ENCODE measurements at regions of chr11 and their contacts with region 1.

Region 1: DNA sequence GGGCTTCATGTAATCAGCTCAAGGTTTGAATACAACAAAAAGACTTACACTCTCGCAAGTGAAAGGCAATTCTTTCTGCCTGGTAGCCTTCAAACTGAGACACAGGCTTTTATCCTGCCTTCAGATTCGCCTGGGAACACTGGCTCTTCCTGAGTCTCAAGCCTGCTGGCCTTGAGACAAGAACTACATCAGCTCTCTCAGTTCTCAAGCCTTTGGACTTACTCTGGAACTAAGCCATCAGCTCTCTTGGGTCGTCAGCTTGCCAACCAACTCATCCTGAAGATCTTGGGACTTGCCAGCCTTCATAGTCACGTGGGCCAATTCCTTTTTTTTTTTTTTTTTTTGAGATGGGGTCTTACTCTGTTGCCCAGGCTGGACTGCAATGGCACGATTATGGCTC is 35.7 kb upstream of the LRRC10B start:
- DNase-seq: no peak
- ATAC-seq: no peak
- H3K4me3 ChIP-seq: no peak overlapping the region
- H3K4me3 Mint-ChIP-seq: no peak overlapping the region
- H3K27ac ChIP-seq: no peak overlapping the region
- H3K27ac Mint-ChIP-seq: peak overlapping the region in 1 of 2 donors; percentile 44
- H3K4me1 ChIP-seq: peaks cover 0 to 5% of the 10 kb centered on the region in 2 experiments
- H3K4me1 Mint-ChIP-seq: peaks cover 1 to 2% (median 2%) of the 10 kb centered on the region in 3 donors
- H3K27me3 ChIP-seq: peaks cover 0 to 4% of the 10 kb centered on the region in 2 experiments
- H3K27me3 Mint-ChIP-seq: no peaks in the 10 kb centered on the region

Region 2: GRCh38 chr11:61266602-61267001 is 206.3 kb before region 1 on chr11:
- CTCF ChIA-PET with region 1: no interaction called
- POLR2A ChIA-PET with region 1: interaction called in 1 of 2 experiments, 11 read pairs
- DNase-seq: no peak
- ATAC-seq: no peak
- H3K4me3 ChIP-seq: no peak overlapping the region
- H3K4me3 Mint-ChIP-seq: no peak overlapping the region
- H3K27ac ChIP-seq: no peak overlapping the region
- H3K27ac Mint-ChIP-seq: no peak overlapping the region
- H3K4me1 ChIP-seq: no peaks in the 10 kb centered on the region
- H3K4me1 Mint-ChIP-seq: no peaks in the 10 kb centered on the region
- H3K27me3 ChIP-seq: peaks cover 0 to 5% of the 10 kb centered on the region in 2 experiments
- H3K27me3 Mint-ChIP-seq: no peaks in the 10 kb centered on the region

Region 3: DNA sequence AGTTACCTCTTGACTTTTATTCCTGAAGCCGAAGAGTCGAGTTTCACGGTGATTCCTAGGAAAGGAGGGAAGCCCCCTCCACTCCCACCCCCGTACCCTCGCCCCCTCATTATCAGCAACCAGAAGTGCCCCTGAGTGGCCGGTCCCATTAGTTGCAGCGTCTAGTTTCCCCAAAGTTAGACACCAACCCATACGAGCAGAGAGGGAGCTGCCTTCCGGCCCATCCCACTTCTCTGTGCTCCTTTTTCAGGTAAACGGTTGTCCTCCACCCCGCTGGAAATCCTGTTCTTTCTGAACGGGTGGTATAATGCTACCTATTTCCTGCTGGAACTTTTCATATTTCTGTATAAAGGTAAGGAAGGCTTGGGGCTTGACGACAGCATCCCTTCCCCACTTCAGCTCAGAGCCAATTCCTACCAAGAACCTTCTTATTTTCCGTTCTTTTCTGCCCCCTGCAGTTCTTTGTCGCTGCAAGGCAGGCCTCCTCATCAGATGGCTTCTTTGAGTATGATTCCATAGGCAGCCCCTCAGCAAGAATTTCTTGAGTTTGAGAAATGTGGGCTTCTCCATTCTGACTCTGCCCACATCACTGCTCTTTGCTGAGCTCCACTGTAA is 79.8 kb before region 1 on chr11:
- CTCF ChIA-PET with region 1: no interaction called
- POLR2A ChIA-PET with region 1: interaction called in 1 of 2 experiments, 10 read pairs
- DNase-seq: peak in 13 of 35 experiments; percentile 6 to 54 (median 14)
- ATAC-seq: peak; percentile 34 to 64 (median 44)
- H3K4me3 ChIP-seq: peak overlapping the region; percentile 76 to 77
- H3K4me3 Mint-ChIP-seq: peak overlapping the region; percentile 91 to 95 (median 91)
- H3K27ac ChIP-seq: peak overlapping the region; percentile 89
- H3K27ac Mint-ChIP-seq: peak overlapping the region; percentile 98 to 99
- H3K4me1 ChIP-seq: peaks cover 6 to 27% of the 10 kb centered on the region in 2 experiments
- H3K4me1 Mint-ChIP-seq: peaks cover 24 to 27% (median 24%) of the 10 kb centered on the region in 3 donors
- H3K27me3 ChIP-seq: no peaks in the 10 kb centered on the region
- H3K27me3 Mint-ChIP-seq: no peaks in the 10 kb centered on the region

Region 4: GRCh38 chr11:61488651-61489291 is 15.9 kb after region 1 on chr11:
- CTCF ChIA-PET with region 1: no interaction called
- POLR2A ChIA-PET with region 1: no interaction called
- DNase-seq: no peak
- ATAC-seq: no peak
- H3K4me3 ChIP-seq: no peak overlapping the region
- H3K4me3 Mint-ChIP-seq: no peak overlapping the region
- H3K27ac ChIP-seq: no peak overlapping the region
- H3K27ac Mint-ChIP-seq: no peak overlapping the region
- H3K4me1 ChIP-seq: no peaks in the 10 kb centered on the region
- H3K4me1 Mint-ChIP-seq: no peaks in the 10 kb centered on the region
- H3K27me3 ChIP-seq: peaks cover 0 to 18% of the 10 kb centered on the region in 2 experiments
- H3K27me3 Mint-ChIP-seq: no peaks in the 10 kb centered on the region